T-cell (primary cell): ENCODE measurements at regions of chr5 and their contacts with region 1.

Region 1: GRCh38 chr5:76256116-76256889 is 146.8 kb upstream of the IQGAP2 start:
- DNase-seq: peak; percentile 18 to 82 (median 50)
- ATAC-seq: peak; percentile 97 to 99 (median 98)
- H3K4me3 ChIP-seq: peak overlapping the region in 1 of 2 donors; percentile 6
- H3K4me3 Mint-ChIP-seq: no peak overlapping the region
- H3K27ac ChIP-seq: no peak overlapping the region
- H3K27ac Mint-ChIP-seq: no peak overlapping the region
- H3K4me1 ChIP-seq: peaks cover 0 to 4% of the 10 kb centered on the region in 2 experiments
- H3K4me1 Mint-ChIP-seq: peaks cover 0 to 10% (median 7%) of the 10 kb centered on the region in 3 donors
- H3K27me3 ChIP-seq: peaks cover 0 to 11% of the 10 kb centered on the region in 2 experiments
- H3K27me3 Mint-ChIP-seq: peaks cover 0 to 3% of the 10 kb centered on the region in 2 donors

Region 2: GRCh38 chr5:76199336-76200318 is 56.7 kb before region 1 on chr5:
- CTCF ChIA-PET with region 1: no interaction called
- POLR2A ChIA-PET with region 1: interaction called in 1 of 2 experiments, 10 read pairs
- DNase-seq: no peak
- ATAC-seq: no peak
- H3K4me3 ChIP-seq: no peak overlapping the region
- H3K4me3 Mint-ChIP-seq: no peak overlapping the region
- H3K27ac ChIP-seq: no peak overlapping the region
- H3K27ac Mint-ChIP-seq: no peak overlapping the region
- H3K4me1 ChIP-seq: peaks cover 3 to 7% of the 10 kb centered on the region in 2 experiments
- H3K4me1 Mint-ChIP-seq: peaks cover 6 to 8% (median 7%) of the 10 kb centered on the region in 3 donors
- H3K27me3 ChIP-seq: no peaks in the 10 kb centered on the region
- H3K27me3 Mint-ChIP-seq: peaks cover 3 to 4% of the 10 kb centered on the region in 2 donors

Region 3: DNA sequence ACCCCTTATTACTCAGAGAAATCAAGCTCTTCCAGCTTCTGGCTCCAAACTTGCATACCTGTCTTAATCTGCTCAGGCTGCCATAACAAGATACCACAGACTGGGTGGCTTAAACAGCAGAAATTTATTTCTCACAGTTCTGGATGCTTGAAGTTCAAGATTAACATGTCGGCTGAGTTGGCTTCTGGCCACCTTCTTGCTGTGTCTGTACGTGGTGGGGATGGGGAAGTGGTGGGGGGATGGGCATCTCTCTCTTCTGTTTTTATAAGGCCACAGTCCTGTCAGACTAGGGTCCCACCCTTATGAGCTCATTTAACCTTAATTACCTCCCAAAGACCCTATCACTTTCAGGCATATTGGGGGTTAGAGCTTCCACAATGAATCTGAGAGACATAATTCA is 32.6 kb before region 1 on chr5:
- CTCF ChIA-PET with region 1: no interaction called
- POLR2A ChIA-PET with region 1: no interaction called
- DNase-seq: no peak
- ATAC-seq: no peak
- H3K4me3 ChIP-seq: no peak overlapping the region
- H3K4me3 Mint-ChIP-seq: no peak overlapping the region
- H3K27ac ChIP-seq: no peak overlapping the region
- H3K27ac Mint-ChIP-seq: no peak overlapping the region
- H3K4me1 ChIP-seq: no peaks in the 10 kb centered on the region
- H3K4me1 Mint-ChIP-seq: no peaks in the 10 kb centered on the region
- H3K27me3 ChIP-seq: no peaks in the 10 kb centered on the region
- H3K27me3 Mint-ChIP-seq: no peaks in the 10 kb centered on the region